Heart left ventricle (tissue), 16 donors: ENCODE measurements at regions of chr18 and their contacts with region 1.

Region 1: GRCh38 chr18:36284671-36285295 is 12.7 kb upstream of the FHOD3 start:
- DNase-seq: peak in 1 of 5 donors; percentile 38
- ATAC-seq: peak in 2 of 4 donors; percentile 48 to 64
- H3K4me3 ChIP-seq: no peak overlapping the region
- H3K27ac ChIP-seq: no peak overlapping the region
- H3K4me1 ChIP-seq: no peaks in the 10 kb centered on the region
- H3K27me3 ChIP-seq: peaks cover 0 to 13% (median 0%) of the 10 kb centered on the region in 9 donors
- CTCF ChIP-seq: peak; percentile 82 to 96 (median 91)
- POLR2A ChIP-seq: no peak

Region 2: DNA sequence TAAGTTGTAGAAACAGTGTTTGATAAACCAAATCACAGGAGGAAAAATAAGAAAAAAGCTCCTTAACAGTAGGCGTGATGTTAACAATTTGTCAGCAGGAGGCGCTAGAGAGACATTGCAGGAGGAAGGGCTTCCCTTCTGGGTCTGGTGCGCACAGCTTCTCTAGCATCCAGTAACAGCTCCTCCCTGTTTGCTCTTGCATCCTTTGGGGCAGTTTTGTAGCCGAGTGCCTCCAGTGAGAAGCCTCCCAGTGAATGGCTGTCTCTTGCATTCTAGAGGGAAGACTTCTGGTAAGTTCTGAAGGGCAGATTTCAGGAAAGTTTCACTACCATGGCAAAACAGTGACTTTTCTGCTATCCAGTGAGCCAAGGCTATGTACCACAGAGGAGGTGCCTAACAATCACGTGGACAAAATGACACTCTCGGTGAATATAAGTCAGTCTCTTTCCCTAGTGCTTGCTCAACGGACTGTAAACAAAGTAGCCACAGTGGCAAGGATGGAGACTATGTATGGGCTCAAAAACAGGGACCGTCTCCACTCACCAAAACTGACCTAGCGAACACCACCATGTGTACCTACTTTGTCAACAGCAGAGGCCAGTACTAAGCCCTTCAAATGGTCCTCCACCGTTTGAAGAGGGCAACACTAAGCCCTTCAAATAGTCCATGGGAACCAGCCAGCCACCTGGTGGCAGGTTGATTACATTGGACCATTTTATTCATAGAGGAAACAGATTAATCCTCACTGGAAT is 898.0 kb before region 1 on chr18:
- intact Hi-C with region 1: loop called in 1 of 10 experiments (anchors 10 kb)
- DNase-seq: peak; percentile 57 to 69 (median 61)
- ATAC-seq: peak in 3 of 4 donors; percentile 66 to 81 (median 69)
- H3K4me3 ChIP-seq: no peak overlapping the region
- H3K27ac ChIP-seq: peak overlapping the region in 1 of 12 donors; percentile 16
- H3K4me1 ChIP-seq: peaks cover 0 to 5% (median 0%) of the 10 kb centered on the region in 12 donors
- H3K27me3 ChIP-seq: peaks cover 0 to 3% (median 0%) of the 10 kb centered on the region in 9 donors
- CTCF ChIP-seq: peak; percentile 86 to 99 (median 92)
- POLR2A ChIP-seq: no peak

Region 3: GRCh38 chr18:35703043-35703688 is 581.6 kb before region 1 on chr18:
- intact Hi-C with region 1: no loop called
- DNase-seq: no peak
- ATAC-seq: peak in 1 of 4 donors; percentile 42
- H3K4me3 ChIP-seq: no peak overlapping the region
- H3K27ac ChIP-seq: no peak overlapping the region
- H3K4me1 ChIP-seq: peaks cover 0 to 17% (median 7%) of the 10 kb centered on the region in 12 donors
- H3K27me3 ChIP-seq: no peaks in the 10 kb centered on the region
- CTCF ChIP-seq: no peak
- POLR2A ChIP-seq: no peak

Region 4: GRCh38 chr18:35756506-35757117 is 528.2 kb before region 1 on chr18:
- intact Hi-C with region 1: loop called in 6 of 10 experiments (anchors 5 to 10 kb)
- DNase-seq: peak in 2 of 5 donors; percentile 50 to 59
- ATAC-seq: peak in 3 of 4 donors; percentile 75 to 85 (median 79)
- H3K4me3 ChIP-seq: no peak overlapping the region
- H3K27ac ChIP-seq: no peak overlapping the region
- H3K4me1 ChIP-seq: no peaks in the 10 kb centered on the region
- H3K27me3 ChIP-seq: no peaks in the 10 kb centered on the region
- CTCF ChIP-seq: peak; percentile 71 to 89 (median 86)
- POLR2A ChIP-seq: no peak

Region 5: GRCh38 chr18:36015629-36016028 is 269.2 kb before region 1 on chr18:
- intact Hi-C with region 1: loop called (anchors 1 to 5 kb)
- DNase-seq: no peak
- ATAC-seq: no peak
- H3K4me3 ChIP-seq: no peak overlapping the region
- H3K27ac ChIP-seq: no peak overlapping the region
- H3K4me1 ChIP-seq: peaks cover 0 to 8% (median 0%) of the 10 kb centered on the region in 12 donors
- H3K27me3 ChIP-seq: no peaks in the 10 kb centered on the region
- CTCF ChIP-seq: no peak
- POLR2A ChIP-seq: no peak

Region 6: DNA sequence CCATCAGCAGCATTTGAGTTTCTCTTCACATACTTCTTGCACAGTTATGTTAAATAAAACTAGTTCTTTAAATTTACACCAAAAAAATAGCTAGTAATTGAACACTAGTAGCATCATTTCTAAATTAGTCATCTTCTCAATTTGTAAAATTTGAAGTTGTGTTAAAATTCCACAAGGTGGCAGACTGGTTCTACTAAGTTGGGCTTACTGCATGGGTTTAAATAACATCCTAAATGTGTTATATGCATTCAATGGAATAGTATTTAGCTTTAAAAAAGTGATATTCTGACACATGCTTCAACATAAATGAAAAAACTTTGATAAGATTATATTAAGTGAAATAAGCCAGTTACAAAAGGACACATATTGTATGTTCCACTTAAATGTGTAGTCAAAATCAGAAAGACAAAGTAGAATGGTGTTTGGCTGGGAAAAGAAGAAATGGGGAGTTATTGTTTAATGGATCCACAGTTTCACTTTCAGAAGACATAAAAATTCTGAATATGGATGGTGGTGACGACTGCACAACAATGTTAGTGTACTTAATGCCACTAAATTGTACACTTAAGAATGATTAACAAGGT is 188.8 kb before region 1 on chr18:
- intact Hi-C with region 1: loop called (anchors 1 to 5 kb)
- DNase-seq: no peak
- ATAC-seq: peak in 1 of 4 donors; percentile 42
- H3K4me3 ChIP-seq: no peak overlapping the region
- H3K27ac ChIP-seq: no peak overlapping the region
- H3K4me1 ChIP-seq: no peaks in the 10 kb centered on the region
- H3K27me3 ChIP-seq: peaks cover 0 to 5% (median 0%) of the 10 kb centered on the region in 9 donors
- CTCF ChIP-seq: peak; percentile 34 to 77 (median 54)
- POLR2A ChIP-seq: no peak

Region 7: GRCh38 chr18:36186911-36187834 is 97.6 kb before region 1 on chr18 and contains the start of gene MOCOS:
- intact Hi-C with region 1: loop called in 7 of 10 experiments (anchors 5 to 10 kb)
- DNase-seq: peak; percentile 79 to 87 (median 81)
- ATAC-seq: peak; percentile 75 to 97 (median 92)
- H3K4me3 ChIP-seq: peak within 1 kb of the TSS; percentile 41 to 96 (median 68)
- H3K27ac ChIP-seq: peak within 1 kb of the TSS in 3 of 12 donors; percentile 36 to 51 (median 46)
- H3K4me1 ChIP-seq: peaks cover 0 to 24% (median 4%) of the 10 kb centered on the region in 12 donors
- H3K27me3 ChIP-seq: peaks cover 0 to 12% (median 0%) of the 10 kb centered on the region in 9 donors
- CTCF ChIP-seq: no peak
- POLR2A ChIP-seq: no peak
- total RNA-seq, gene MOCOS: 0.07 to 1.0 (median 0.25) TPM

Region 8: GRCh38 chr18:36195427-36196122 is 89.2 kb before region 1 on chr18:
- intact Hi-C with region 1: loop called in 1 of 10 experiments (anchors 10 kb)
- DNase-seq: no peak
- ATAC-seq: peak; percentile 22 to 72 (median 48)
- H3K4me3 ChIP-seq: no peak overlapping the region
- H3K27ac ChIP-seq: no peak overlapping the region
- H3K4me1 ChIP-seq: peaks cover 0 to 4% (median 0%) of the 10 kb centered on the region in 12 donors
- H3K27me3 ChIP-seq: no peaks in the 10 kb centered on the region
- CTCF ChIP-seq: no peak
- POLR2A ChIP-seq: no peak

Region 9: GRCh38 chr18:36247036-36247435 is 37.7 kb before region 1 on chr18:
- intact Hi-C with region 1: no loop called
- DNase-seq: no peak
- ATAC-seq: no peak
- H3K4me3 ChIP-seq: no peak overlapping the region
- H3K27ac ChIP-seq: no peak overlapping the region
- H3K4me1 ChIP-seq: no peaks in the 10 kb centered on the region
- H3K27me3 ChIP-seq: no peaks in the 10 kb centered on the region
- CTCF ChIP-seq: no peak
- POLR2A ChIP-seq: no peak